ENCODE measurements at regions of chr2 and their contacts with region 1.

Region 1: GRCh38 chr2:12330916-12331315 is 385.8 kb upstream of the TRIB2 start:
- DNase-seq: no peak
- H3K4me3 ChIP-seq: no peak overlapping the region
- H3K27ac ChIP-seq: no peak overlapping the region
- H3K4me1 ChIP-seq: no peaks in the 10 kb centered on the region
- H3K27me3 ChIP-seq: no peaks in the 10 kb centered on the region
- CTCF ChIP-seq: no peak
- POLR2A ChIP-seq: no peak

Region 2: GRCh38 chr2:12244070-12244469 is 86.8 kb before region 1 on chr2:
- intact Hi-C with region 1: loop called (anchors 5 kb)
- DNase-seq: no peak
- H3K4me3 ChIP-seq: no peak overlapping the region
- H3K27ac ChIP-seq: no peak overlapping the region
- H3K4me1 ChIP-seq: no peaks in the 10 kb centered on the region
- H3K27me3 ChIP-seq: no peaks in the 10 kb centered on the region
- CTCF ChIP-seq: no peak
- POLR2A ChIP-seq: no peak